ENCODE measurements at regions of chr15 and their contacts with region 1.

Region 1: GRCh38 chr15:35690698-35691116 is 144.7 kb upstream of the DPH6 start:
- DNase-seq: peak in 1 of 2 donors; percentile 79
- H3K4me3 ChIP-seq: no peak overlapping the region
- H3K27ac ChIP-seq: peak overlapping the region; percentile 82 to 88
- H3K4me1 ChIP-seq: peaks cover 9 to 34% of the 10 kb centered on the region in 2 donors
- H3K27me3 ChIP-seq: no peaks in the 10 kb centered on the region
- CTCF ChIP-seq: no peak

Region 2: GRCh38 chr15:35306361-35306981 is 384.2 kb before region 1 on chr15:
- intact Hi-C with region 1: loop called (anchors 2 kb)
- DNase-seq: no peak
- H3K4me3 ChIP-seq: no peak overlapping the region
- H3K27ac ChIP-seq: peak overlapping the region; percentile 80 to 85
- H3K4me1 ChIP-seq: peaks cover 6 to 28% of the 10 kb centered on the region in 2 donors
- H3K27me3 ChIP-seq: no peaks in the 10 kb centered on the region
- CTCF ChIP-seq: no peak

Region 3: GRCh38 chr15:35545824-35546510 is 144.7 kb before region 1 on chr15 and contains the start of gene DPH6:
- intact Hi-C with region 1: loop called (anchors 2 kb)
- DNase-seq: peak; percentile 15 to 90
- H3K4me3 ChIP-seq: peak within 1 kb of the TSS; percentile 72 to 84
- H3K27ac ChIP-seq: peak within 1 kb of the TSS; percentile 93 to 98
- H3K4me1 ChIP-seq: peaks cover 0 to 13% of the 10 kb centered on the region in 2 donors
- H3K27me3 ChIP-seq: no peaks in the 10 kb centered on the region
- CTCF ChIP-seq: no peak
- total RNA-seq, gene DPH6: 9.0 TPM

Region 4: GRCh38 chr15:35624881-35625280 is 65.8 kb before region 1 on chr15:
- intact Hi-C with region 1: loop called (anchors 5 kb)
- DNase-seq: peak; percentile 12 to 83
- H3K4me3 ChIP-seq: peak overlapping the region in 1 of 2 donors; percentile 18
- H3K27ac ChIP-seq: no peak overlapping the region
- H3K4me1 ChIP-seq: peaks cover 3 to 19% of the 10 kb centered on the region in 2 donors
- H3K27me3 ChIP-seq: no peaks in the 10 kb centered on the region
- CTCF ChIP-seq: no peak

Region 5: DNA sequence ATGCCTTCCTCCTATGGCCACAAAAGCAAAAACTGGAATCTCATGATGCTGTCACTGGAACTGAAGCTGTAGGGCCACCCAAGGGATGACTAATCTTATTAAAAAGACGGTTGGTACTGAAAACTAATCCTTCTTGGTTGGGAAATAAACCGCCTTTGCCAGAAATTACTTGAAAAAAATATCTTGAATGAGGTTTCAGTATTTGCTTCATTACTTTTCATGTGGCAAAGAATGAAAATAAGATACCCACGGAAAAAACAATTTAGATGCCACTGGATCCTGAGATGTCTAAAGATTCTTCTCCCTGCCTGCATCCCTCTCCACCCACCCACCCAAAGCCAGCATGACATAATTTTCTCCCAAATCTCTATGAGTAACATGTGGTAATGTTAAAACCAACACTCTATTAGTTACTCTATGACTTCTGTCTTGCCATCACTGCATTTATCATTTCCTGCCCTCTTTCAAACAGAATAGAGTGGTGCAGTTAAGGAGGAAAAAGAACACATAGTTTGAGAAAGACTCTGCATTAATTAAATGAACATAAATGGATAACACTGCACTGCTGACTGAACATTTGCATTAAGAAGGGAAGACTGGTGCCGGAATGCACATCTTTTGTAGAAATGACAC is 32.9 kb before region 1 on chr15:
- intact Hi-C with region 1: loop called (anchors 5 kb)
- DNase-seq: no peak
- H3K4me3 ChIP-seq: no peak overlapping the region
- H3K27ac ChIP-seq: peak overlapping the region; percentile 31 to 47
- H3K4me1 ChIP-seq: peaks cover 0 to 6% of the 10 kb centered on the region in 2 donors
- H3K27me3 ChIP-seq: no peaks in the 10 kb centered on the region
- CTCF ChIP-seq: no peak

Region 6: DNA sequence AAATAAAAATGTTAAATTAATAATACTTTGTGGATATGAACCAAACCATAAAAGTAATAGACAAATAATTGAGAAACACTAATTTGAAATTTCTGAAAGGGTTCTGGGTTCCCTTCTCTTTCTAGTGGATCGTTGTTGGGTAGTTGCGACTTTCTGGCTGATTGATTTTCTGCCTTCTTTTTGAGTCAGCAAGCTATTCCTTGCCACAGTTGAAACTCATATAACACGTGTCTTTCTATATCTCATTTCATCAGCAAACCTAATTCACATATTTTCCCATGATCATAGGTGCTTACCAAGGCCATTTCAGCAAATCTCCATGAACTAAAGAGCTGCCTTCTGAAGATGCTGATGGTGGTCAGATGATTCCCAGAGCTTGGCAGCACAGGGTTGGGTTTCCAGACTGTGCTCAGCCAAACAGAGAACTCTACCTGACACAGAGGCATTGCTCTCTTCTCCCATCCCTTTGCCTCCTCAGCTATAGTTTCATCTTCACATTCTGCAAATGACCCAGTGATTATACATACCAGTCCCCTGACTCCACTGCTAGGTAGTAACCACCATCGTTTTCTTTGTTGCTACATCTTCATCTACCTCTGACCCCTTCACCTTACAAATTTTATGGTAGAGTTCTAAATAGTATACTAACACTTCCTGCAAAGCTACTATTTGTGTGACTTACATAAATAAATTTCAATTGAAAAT is 239.2 kb after region 1 on chr15:
- intact Hi-C with region 1: no loop called
- DNase-seq: no peak
- H3K4me3 ChIP-seq: no peak overlapping the region
- H3K27ac ChIP-seq: no peak overlapping the region
- H3K4me1 ChIP-seq: no peaks in the 10 kb centered on the region
- H3K27me3 ChIP-seq: no peaks in the 10 kb centered on the region
- CTCF ChIP-seq: no peak